Activated CD8-positive, alpha-beta T cell treated with anti-CD3 and anti-CD28 coated beads for 36 hours (primary cell): ENCODE measurements at regions of chr11 and their contacts with region 1.

Region 1: DNA sequence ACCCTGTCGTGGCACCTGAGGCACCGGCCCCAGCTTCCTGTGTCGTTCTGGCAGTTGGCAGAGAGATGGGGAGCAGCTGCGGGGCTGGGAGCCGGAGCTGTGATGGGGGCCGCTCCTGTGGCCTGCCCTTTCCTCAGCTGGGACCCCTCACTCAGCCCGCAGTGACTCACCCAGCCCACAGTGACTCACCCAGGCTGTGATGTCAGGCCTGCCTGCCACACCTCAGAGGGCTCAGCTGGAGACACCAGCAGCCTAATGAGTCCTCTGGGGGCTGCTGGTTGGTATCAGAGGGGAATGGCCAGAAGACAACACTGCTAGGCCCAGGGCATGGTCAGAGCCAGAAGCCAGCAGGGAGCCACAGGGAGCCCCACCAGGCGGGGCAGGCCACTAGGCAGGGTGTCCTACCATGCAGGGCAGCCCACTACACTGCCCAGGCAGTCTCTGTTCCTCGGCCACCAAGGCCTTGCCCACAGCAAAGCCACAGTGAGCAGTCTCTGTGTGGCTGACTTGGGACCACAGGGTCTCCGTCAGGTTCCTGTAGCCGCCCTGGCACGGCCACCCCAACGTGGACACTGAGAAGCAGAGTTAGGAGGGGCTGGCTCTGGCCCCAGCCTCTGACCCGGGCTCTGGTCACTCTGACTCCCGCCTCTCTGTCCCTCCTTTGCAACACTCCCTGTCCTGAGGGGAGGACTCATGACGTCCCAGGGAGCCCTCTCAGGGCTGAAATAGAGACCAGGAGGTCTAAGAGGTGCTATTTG is 4.2 kb upstream of the FXYD2 start:
- DNase-seq: peak; percentile 97
- ATAC-seq: peak; percentile 89
- H3K4me3 Mint-ChIP-seq: peak overlapping the region; percentile 42
- H3K27ac Mint-ChIP-seq: peak overlapping the region; percentile 77
- H3K4me1 Mint-ChIP-seq: peaks cover 68% of the 10 kb centered on the region
- H3K27me3 Mint-ChIP-seq: no peaks in the 10 kb centered on the region
- CTCF ChIP-seq: no peak

Region 2: GRCh38 chr11:117843666-117844484 is 15.1 kb after region 1 on chr11:
- CTCF ChIA-PET with region 1: interaction called, 29 read pairs
- POLR2A ChIA-PET with region 1: no interaction called
- intact Hi-C with region 1: no loop called
- DNase-seq: peak; percentile 92
- ATAC-seq: peak; percentile 96
- H3K4me3 Mint-ChIP-seq: no peak overlapping the region
- H3K27ac Mint-ChIP-seq: no peak overlapping the region
- H3K4me1 Mint-ChIP-seq: peaks cover 4% of the 10 kb centered on the region
- H3K27me3 Mint-ChIP-seq: no peaks in the 10 kb centered on the region
- CTCF ChIP-seq: peak; percentile 96